Caco-2 (cell line): ENCODE measurements at regions of chr11 and their contacts with region 1.

Region 1: DNA sequence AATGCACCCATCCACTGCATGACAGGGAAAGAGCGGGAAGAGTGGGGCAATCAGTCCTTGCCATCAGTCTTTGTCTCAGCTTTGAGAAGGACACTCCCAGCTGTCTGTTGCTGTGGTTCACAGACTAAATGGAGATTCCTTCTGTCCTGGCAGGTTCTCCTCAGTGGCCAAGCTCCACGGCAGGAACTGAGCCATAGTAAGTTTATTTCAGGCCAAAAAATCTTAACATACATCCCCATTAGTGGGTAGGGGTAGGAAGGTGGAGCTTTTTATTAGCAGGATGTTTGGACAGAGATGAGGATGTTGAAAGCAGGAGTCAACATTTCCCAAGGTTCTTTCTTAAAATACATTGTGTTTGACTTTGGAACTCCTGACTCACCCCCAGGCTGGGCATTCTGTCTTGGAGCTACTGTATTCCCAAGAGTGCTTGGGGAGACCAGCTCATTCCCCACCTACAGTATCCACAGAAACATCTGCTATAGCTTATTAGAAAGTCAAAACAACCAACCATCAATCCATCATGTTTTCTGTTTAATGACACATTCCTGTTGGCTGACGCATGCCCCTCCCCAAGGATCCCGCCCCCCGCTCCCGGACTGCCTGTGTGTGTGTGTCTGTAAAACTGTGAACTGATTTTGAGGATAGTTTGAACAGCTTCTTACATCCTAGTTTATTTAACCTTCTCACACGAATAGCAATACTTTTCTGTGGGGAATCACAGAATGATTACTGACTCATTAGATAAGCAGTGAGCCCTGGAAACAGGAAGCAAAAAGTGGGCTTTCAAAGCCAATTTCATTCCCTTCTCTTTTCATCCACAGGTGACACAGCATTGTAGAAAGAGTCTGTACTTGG is 109.5 kb downstream of the CCDC81 start:
- DNase-seq: peak; percentile 90 to 93
- H3K4me3 ChIP-seq: no peak overlapping the region
- H3K4me3 Mint-ChIP-seq: peak overlapping the region; percentile 1
- H3K27ac Mint-ChIP-seq: peak overlapping the region; percentile 77
- H3K4me1 ChIP-seq: peaks cover 54% of the 10 kb centered on the region
- H3K4me1 Mint-ChIP-seq: peaks cover 57% of the 10 kb centered on the region
- H3K27me3 ChIP-seq: no peaks in the 10 kb centered on the region
- H3K27me3 Mint-ChIP-seq: no peaks in the 10 kb centered on the region
- CTCF ChIP-seq: no peak

Region 2: GRCh38 chr11:86444981-86445380 is 39.2 kb before region 1 on chr11:
- CTCF ChIA-PET with region 1: no interaction called
- POLR2A ChIA-PET with region 1: no interaction called
- intact Hi-C with region 1: no loop called
- DNase-seq: no peak
- H3K4me3 ChIP-seq: no peak overlapping the region
- H3K4me3 Mint-ChIP-seq: no peak overlapping the region
- H3K27ac Mint-ChIP-seq: no peak overlapping the region
- H3K4me1 ChIP-seq: no peaks in the 10 kb centered on the region
- H3K4me1 Mint-ChIP-seq: no peaks in the 10 kb centered on the region
- H3K27me3 ChIP-seq: no peaks in the 10 kb centered on the region
- H3K27me3 Mint-ChIP-seq: no peaks in the 10 kb centered on the region
- CTCF ChIP-seq: no peak

Region 3: DNA sequence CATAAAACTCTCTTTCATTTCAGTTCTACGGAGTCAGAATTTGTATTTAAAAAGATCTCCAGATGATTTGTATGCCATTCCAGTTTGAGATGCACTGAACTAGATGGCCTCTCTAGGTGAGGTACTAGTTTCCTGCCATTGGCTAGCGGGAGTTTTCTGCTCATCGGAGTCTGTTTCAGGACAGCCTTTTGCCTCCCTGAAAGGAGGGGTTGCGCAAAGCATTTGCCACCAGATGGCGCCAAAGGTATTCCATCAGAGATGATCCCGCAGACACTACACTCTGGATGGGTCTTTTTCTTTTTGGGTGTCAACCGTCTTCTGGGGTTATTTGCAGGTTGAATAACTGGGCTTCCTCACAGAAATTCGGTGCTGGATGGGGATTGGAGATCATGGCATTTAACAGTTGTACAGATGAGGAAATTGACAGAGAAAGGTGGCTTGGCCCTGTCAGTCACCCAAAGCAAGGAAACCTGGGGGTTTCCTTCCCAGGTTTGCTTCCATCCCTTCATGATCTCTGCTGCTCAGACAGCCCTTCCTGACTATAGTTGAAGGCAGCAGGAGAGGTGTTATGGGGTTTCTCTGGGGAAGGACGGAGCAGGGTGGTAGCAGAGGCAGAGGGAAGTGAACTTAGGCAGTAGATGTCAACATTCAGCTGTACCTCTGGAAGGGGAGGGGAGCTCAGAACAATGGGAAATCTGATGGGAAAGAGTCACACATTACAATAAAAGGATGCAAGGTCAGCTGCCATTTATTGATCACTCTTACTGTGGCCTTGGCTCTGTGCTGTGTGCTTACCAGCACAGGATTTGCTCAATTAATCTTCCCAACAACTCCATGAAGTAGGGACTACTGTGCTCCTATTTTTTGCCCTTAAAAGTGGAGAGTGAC is 27.9 kb before region 1 on chr11:
- CTCF ChIA-PET with region 1: interaction called, 12 read pairs
- POLR2A ChIA-PET with region 1: no interaction called
- intact Hi-C with region 1: loop called (anchors 1 kb)
- DNase-seq: peak; percentile 91 to 93
- H3K4me3 ChIP-seq: no peak overlapping the region
- H3K4me3 Mint-ChIP-seq: no peak overlapping the region
- H3K27ac Mint-ChIP-seq: peak overlapping the region; percentile 65
- H3K4me1 ChIP-seq: peaks cover 29% of the 10 kb centered on the region
- H3K4me1 Mint-ChIP-seq: peaks cover 41% of the 10 kb centered on the region
- H3K27me3 ChIP-seq: no peaks in the 10 kb centered on the region
- H3K27me3 Mint-ChIP-seq: no peaks in the 10 kb centered on the region
- CTCF ChIP-seq: peak; percentile 98